ENCODE measurements at regions of chr2 and their contacts with region 1.

Region 1: DNA sequence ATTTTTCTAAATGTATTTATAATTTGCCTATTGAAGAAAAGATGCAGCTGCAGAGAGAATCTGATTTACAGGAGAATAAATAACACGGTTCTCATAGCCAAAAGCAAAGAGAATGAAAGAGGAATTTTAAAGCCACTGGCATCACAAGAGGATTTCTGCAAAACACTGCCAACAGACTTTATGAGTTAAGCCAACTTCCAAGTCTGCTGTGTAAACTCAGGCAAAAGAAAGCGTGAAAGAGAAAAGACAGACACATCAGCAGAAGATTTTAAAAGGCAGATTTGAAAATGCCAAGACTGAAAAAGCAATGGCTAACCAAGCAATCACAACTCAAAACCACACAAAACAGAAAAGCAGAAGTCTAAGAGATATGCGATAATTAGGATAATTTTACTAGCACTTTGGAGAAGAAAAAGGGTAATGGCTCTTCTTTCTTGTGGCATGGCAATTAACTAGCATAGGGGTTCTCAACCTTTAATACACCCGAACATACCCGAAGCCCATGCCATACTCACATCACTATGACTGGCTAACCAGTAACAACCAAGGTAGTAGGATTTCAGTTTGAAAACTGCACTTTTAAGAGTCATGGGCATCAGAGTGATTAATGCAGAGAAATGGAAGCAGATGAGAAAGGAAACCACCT is 4.9 kb downstream of the DARS1 start:
- DNase-seq: no peak
- H3K27ac ChIP-seq: no peak overlapping the region
- CTCF ChIP-seq: no peak

Region 2: DNA sequence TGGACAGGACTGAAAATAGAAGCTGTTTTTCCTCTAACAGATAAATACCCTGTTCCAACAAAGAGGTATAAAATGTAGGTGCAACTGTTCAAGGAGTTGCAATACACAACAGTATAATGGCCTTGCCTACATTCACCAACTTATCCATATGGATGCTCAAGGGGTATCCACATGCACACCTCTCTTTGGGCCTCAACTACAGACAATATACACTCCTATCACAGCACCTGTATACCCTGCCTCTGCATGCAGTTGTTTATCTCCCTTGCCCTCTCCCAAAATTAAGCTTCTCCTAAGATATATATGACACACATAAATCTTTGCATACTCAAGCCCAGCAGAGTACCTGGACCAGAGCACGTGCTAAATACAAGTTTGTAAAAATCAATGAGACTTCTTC is 32.4 kb before region 1 on chr2:
- CTCF ChIA-PET with region 1: no interaction called
- POLR2A ChIA-PET with region 1: interaction called, 17 read pairs
- DNase-seq: no peak
- H3K27ac ChIP-seq: peak overlapping the region; percentile 92
- CTCF ChIP-seq: no peak

Region 3: DNA sequence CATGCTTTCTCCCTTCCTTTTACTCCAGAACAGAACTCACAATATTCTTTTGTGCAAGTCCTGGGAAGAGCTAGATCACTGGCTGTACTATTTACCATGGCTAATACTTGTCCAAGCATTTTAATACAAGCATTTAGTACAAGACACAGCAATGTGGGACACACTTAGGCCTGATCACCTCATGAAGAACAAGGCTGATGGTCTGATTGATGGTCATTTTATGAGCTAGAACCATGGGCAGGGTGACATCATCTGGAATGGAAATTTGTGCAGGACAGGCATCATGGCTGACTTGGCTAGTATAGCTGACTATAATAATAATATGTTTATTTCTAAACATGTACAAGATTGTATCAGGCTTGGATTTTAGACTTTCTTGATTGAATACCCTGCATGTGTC is 1609.5 kb after region 1 on chr2:
- CTCF ChIA-PET with region 1: no interaction called
- POLR2A ChIA-PET with region 1: no interaction called
- DNase-seq: no peak
- H3K27ac ChIP-seq: no peak overlapping the region
- CTCF ChIP-seq: no peak